ENCODE measurements at regions of chr6 and their contacts with region 1.

Region 1: GRCh38 chr6:158649289-158650143 is at the start of gene SYTL3:
- DNase-seq: peak; percentile 31 to 98 (median 89)
- ATAC-seq: peak; percentile 43 to 70 (median 54)
- H3K4me3 ChIP-seq: peak within 1 kb of the TSS; percentile 5 to 35
- H3K4me3 Mint-ChIP-seq: peak within 1 kb of the TSS; percentile 65 to 74 (median 68)
- H3K27ac ChIP-seq: peak within 1 kb of the TSS; percentile 99
- H3K27ac Mint-ChIP-seq: peak within 1 kb of the TSS; percentile 95 to 99
- H3K4me1 ChIP-seq: peaks cover 30 to 71% of the 10 kb centered on the region in 2 experiments
- H3K4me1 Mint-ChIP-seq: peaks cover 63 to 79% (median 68%) of the 10 kb centered on the region in 3 donors
- H3K27me3 ChIP-seq: no peaks in the 10 kb centered on the region
- H3K27me3 Mint-ChIP-seq: no peaks in the 10 kb centered on the region
- total RNA-seq, gene SYTL3: 14.4 to 45.6 (median 22.9) TPM

Region 2: DNA sequence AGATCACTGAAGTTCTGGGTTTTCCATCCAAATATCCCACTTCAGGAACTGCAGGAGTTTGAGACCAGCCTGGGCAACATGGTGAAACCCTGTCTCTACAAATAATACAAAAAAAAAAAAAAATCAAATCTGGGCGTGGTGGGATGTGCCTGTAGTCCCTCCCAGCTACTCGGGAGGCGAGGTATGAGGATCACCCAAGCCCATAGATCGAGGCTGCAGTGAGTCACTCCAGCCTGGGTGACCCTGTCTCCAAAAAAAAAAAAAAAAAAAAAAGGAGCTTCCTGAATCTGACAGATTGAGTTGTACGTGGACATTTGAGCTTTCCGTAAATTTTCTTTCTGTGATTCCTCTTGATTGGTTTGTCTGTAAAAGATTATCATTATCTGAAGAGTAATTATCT is 281.7 kb before region 1 on chr6:
- CTCF ChIA-PET with region 1: no interaction called
- POLR2A ChIA-PET with region 1: interaction called in 1 of 2 experiments, 10 read pairs
- DNase-seq: no peak
- ATAC-seq: no peak
- H3K4me3 ChIP-seq: no peak overlapping the region
- H3K4me3 Mint-ChIP-seq: no peak overlapping the region
- H3K27ac ChIP-seq: no peak overlapping the region
- H3K27ac Mint-ChIP-seq: no peak overlapping the region
- H3K4me1 ChIP-seq: no peaks in the 10 kb centered on the region
- H3K4me1 Mint-ChIP-seq: peaks cover 8 to 11% (median 10%) of the 10 kb centered on the region in 3 donors
- H3K27me3 ChIP-seq: no peaks in the 10 kb centered on the region
- H3K27me3 Mint-ChIP-seq: no peaks in the 10 kb centered on the region

Region 3: DNA sequence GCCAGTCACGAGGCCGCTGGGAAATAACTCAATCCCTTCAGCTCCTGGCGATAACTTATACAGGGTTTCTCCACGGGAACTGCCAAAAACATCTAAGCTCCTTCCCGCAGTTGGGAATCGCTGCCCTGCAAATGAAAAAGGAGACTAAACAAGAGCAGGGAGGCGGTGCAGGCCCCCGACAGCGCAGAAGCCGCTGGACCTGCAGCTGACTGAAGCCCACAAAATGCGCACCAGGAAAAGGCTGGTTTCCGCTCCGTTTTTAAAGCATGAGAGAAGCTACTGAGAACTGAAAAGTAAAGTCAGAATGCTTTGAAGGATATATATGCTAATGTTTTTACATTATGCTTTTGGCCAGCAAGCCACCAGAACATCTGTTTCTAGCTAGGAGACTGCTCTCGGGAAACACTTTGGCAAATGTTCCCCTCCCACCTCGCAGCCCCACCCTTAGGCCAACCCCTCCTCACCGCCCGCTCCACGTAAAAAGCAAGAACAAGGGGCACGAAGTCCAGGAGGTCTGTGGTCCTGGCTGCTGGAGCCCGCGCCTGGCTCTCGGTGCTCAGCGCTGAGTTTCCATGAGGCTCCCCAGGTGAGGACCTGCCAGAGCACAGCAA is 953.0 kb after region 1 on chr6:
- CTCF ChIA-PET with region 1: no interaction called
- POLR2A ChIA-PET with region 1: no interaction called
- DNase-seq: no peak
- ATAC-seq: no peak
- H3K4me3 ChIP-seq: no peak overlapping the region
- H3K4me3 Mint-ChIP-seq: no peak overlapping the region
- H3K27ac ChIP-seq: no peak overlapping the region
- H3K27ac Mint-ChIP-seq: no peak overlapping the region
- H3K4me1 ChIP-seq: peaks cover 0 to 3% of the 10 kb centered on the region in 2 experiments
- H3K4me1 Mint-ChIP-seq: no peaks in the 10 kb centered on the region
- H3K27me3 ChIP-seq: peaks cover 0 to 8% of the 10 kb centered on the region in 2 experiments
- H3K27me3 Mint-ChIP-seq: peaks cover 9 to 12% of the 10 kb centered on the region in 2 donors